B cell (primary cell): ENCODE measurements at regions of chr3 and their contacts with region 1.

Region 1: GRCh38 chr3:71875461-71875947 is 90.6 kb upstream of the PROK2 start:
- DNase-seq: peak; percentile 88
- ATAC-seq: peak; percentile 99
- H3K4me3 ChIP-seq: no peak overlapping the region
- H3K4me3 Mint-ChIP-seq: no peak overlapping the region
- H3K27ac ChIP-seq: no peak overlapping the region
- H3K27ac Mint-ChIP-seq: no peak overlapping the region
- H3K4me1 ChIP-seq: peaks cover 5 to 10% of the 10 kb centered on the region in 2 donors
- H3K4me1 Mint-ChIP-seq: peaks cover 17% of the 10 kb centered on the region
- H3K27me3 ChIP-seq: peaks cover 0 to 30% (median 20%) of the 10 kb centered on the region in 4 experiments
- H3K27me3 Mint-ChIP-seq: peaks cover 42% of the 10 kb centered on the region
- CTCF ChIP-seq: peak; percentile 88

Region 2: GRCh38 chr3:71725279-71725991 is 150.1 kb before region 1 on chr3 and contains the start of gene EIF4E3:
- CTCF ChIA-PET with region 1: interaction called, 15 read pairs
- POLR2A ChIA-PET with region 1: no interaction called
- intact Hi-C with region 1: no loop called
- DNase-seq: peak; percentile 51
- ATAC-seq: peak; percentile 73
- H3K4me3 ChIP-seq: peak within 1 kb of the TSS; percentile 59 to 71 (median 68)
- H3K4me3 Mint-ChIP-seq: peak within 1 kb of the TSS; percentile 82
- H3K27ac ChIP-seq: no peak within 1 kb of the TSS
- H3K27ac Mint-ChIP-seq: peak within 1 kb of the TSS; percentile 43
- H3K4me1 ChIP-seq: peaks cover 29% of the 10 kb centered on the region in 2 donors
- H3K4me1 Mint-ChIP-seq: peaks cover 43% of the 10 kb centered on the region
- H3K27me3 ChIP-seq: peaks cover 0 to 27% (median 0%) of the 10 kb centered on the region in 4 experiments
- H3K27me3 Mint-ChIP-seq: peaks cover 8% of the 10 kb centered on the region
- CTCF ChIP-seq: no peak
- total RNA-seq, gene EIF4E3: 4.2 and 5.0 TPM in 2 replicates

Region 3: DNA sequence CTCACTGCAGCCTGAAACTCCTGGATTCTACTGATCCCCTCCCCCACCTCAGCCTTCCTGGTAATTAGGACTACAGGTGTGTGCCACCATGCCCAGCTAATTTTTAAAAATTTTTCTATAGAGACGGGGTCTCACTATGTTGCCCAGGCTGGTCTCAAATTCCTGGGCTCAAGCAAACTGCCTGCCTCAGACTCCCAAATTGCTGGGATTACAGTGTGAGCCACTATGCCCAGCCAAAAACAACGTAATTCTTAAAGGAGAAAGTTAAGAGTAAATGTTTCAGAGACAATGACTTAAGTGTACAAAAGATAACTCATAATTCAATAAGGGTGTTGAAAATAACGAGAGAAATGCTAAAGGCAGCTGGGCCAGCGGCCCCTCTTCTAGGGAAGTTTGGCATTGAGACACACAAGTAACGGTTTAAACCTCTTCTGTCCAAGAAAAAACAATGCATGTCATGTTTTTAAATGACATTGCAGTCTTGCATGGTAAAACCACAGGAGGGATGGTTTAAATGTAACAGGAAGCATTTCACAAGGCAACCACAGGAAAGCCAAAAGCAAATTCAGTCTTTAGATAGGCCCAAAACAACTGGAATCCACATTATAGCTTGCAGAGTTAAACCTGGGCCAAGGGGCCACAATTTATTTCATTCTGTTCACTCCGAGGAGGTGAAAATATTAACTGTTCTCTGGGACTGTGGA is 95.7 kb before region 1 on chr3:
- CTCF ChIA-PET with region 1: no interaction called
- POLR2A ChIA-PET with region 1: no interaction called
- intact Hi-C with region 1: no loop called
- DNase-seq: no peak
- ATAC-seq: no peak
- H3K4me3 ChIP-seq: peak overlapping the region in 1 of 5 experiments; percentile 39
- H3K4me3 Mint-ChIP-seq: no peak overlapping the region
- H3K27ac ChIP-seq: no peak overlapping the region
- H3K27ac Mint-ChIP-seq: no peak overlapping the region
- H3K4me1 ChIP-seq: peaks cover 7 to 9% of the 10 kb centered on the region in 2 donors
- H3K4me1 Mint-ChIP-seq: peaks cover 9% of the 10 kb centered on the region
- H3K27me3 ChIP-seq: peaks cover 0 to 20% (median 8%) of the 10 kb centered on the region in 4 experiments
- H3K27me3 Mint-ChIP-seq: peaks cover 58% of the 10 kb centered on the region
- CTCF ChIP-seq: no peak

Region 4: GRCh38 chr3:72665701-72666443 is 790.4 kb after region 1 on chr3:
- CTCF ChIA-PET with region 1: interaction called, 21 read pairs
- POLR2A ChIA-PET with region 1: no interaction called
- intact Hi-C with region 1: loop called (anchors 5 kb)
- DNase-seq: peak; percentile 59
- ATAC-seq: peak; percentile 39
- H3K4me3 ChIP-seq: no peak overlapping the region
- H3K4me3 Mint-ChIP-seq: no peak overlapping the region
- H3K27ac ChIP-seq: no peak overlapping the region
- H3K27ac Mint-ChIP-seq: no peak overlapping the region
- H3K4me1 ChIP-seq: no peaks in the 10 kb centered on the region
- H3K4me1 Mint-ChIP-seq: no peaks in the 10 kb centered on the region
- H3K27me3 ChIP-seq: peaks cover 0 to 13% (median 0%) of the 10 kb centered on the region in 4 experiments
- H3K27me3 Mint-ChIP-seq: peaks cover 16% of the 10 kb centered on the region
- CTCF ChIP-seq: peak; percentile 70

Region 5: DNA sequence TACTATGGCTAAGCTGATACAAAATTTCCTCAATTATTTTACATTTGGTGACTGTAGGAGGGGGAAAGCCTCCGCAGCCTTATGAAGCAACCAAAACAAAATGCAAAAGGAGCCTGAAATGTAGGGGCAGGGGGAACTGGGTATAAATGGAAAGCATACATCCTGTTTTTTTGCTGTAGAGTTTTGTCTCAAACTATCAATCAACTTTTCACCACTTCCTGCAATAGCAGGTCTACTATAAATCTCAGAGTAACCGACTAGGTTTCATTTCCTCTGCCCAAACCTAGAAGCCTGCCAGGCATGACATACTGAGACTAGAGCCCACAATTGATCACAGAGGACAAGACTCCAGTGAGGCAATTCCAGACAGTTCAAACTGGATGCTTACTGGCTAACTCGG is 881.4 kb after region 1 on chr3:
- CTCF ChIA-PET with region 1: interaction called, 4 read pairs
- POLR2A ChIA-PET with region 1: no interaction called
- intact Hi-C with region 1: loop called (anchors 10 kb)
- DNase-seq: peak; percentile 84
- ATAC-seq: peak; percentile 98
- H3K4me3 ChIP-seq: peak overlapping the region in 4 of 5 experiments; percentile 19 to 55 (median 32)
- H3K4me3 Mint-ChIP-seq: peak overlapping the region; percentile 61
- H3K27ac ChIP-seq: no peak overlapping the region
- H3K27ac Mint-ChIP-seq: peak overlapping the region; percentile 22
- H3K4me1 ChIP-seq: peaks cover 22 to 28% of the 10 kb centered on the region in 2 donors
- H3K4me1 Mint-ChIP-seq: peaks cover 28% of the 10 kb centered on the region
- H3K27me3 ChIP-seq: peaks cover 0 to 40% (median 21%) of the 10 kb centered on the region in 4 experiments
- H3K27me3 Mint-ChIP-seq: peaks cover 59% of the 10 kb centered on the region
- CTCF ChIP-seq: no peak